Activated CD8-positive, alpha-beta T cell treated with anti-CD3 and anti-CD28 coated beads, Interleukin-2, amount 10 ng/mL, durations not matched to agents 7 days and 5 days (primary cell): ENCODE measurements at regions of chr1 and their contacts with region 1.

Region 1: DNA sequence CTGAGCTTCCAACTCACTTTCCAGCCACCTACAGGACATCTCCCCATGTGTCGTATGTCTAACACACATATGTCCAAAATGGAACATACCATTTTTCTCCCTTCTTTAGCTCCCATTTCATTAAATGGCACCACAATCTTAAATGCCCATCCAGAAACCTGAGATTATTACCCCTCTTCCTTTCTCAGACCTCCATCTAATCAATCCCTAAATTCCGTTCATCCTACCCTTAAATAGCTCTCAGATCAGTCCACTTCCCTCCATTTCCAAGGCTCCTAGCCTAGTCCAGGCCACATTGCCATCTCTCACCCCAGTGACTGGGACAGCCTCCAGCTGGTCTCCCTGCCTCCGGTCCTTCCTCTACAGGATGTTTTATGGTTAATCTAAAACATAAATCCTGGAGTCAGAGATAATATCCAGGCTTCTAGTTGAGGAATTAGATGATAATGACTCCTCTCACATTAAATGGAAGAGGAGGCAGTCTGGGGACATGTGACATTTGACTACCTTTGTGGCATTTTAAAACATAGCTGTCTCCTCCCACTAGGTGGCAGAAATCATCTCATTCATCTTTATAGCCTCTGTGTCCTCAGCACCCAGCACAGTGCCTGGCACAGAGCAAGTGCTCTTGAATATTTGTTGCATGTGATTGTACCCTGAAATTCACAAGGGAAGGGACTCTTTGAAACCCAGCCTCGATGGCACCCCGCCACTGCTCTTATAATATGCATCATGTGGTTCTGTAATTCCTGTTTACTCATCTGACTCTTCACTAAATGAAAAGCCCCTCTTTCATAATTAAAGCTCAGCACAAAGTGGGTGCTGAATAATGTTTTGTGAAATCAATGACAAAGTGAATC is 102.3 kb downstream of the TMEM53 start:
- DNase-seq: peak; percentile 42
- ATAC-seq: peak; percentile 75
- H3K4me3 Mint-ChIP-seq: no peak overlapping the region
- H3K27ac Mint-ChIP-seq: no peak overlapping the region
- H3K4me1 Mint-ChIP-seq: no peaks in the 10 kb centered on the region
- H3K27me3 Mint-ChIP-seq: peaks cover 24% of the 10 kb centered on the region

Region 2: GRCh38 chr1:44557778-44558177 is 14.2 kb before region 1 on chr1:
- CTCF ChIA-PET with region 1: interaction called, 30 read pairs
- POLR2A ChIA-PET with region 1: no interaction called
- DNase-seq: no peak
- ATAC-seq: no peak
- H3K4me3 Mint-ChIP-seq: no peak overlapping the region
- H3K27ac Mint-ChIP-seq: no peak overlapping the region
- H3K4me1 Mint-ChIP-seq: peaks cover 18% of the 10 kb centered on the region
- H3K27me3 Mint-ChIP-seq: peaks cover 6% of the 10 kb centered on the region

Region 3: DNA sequence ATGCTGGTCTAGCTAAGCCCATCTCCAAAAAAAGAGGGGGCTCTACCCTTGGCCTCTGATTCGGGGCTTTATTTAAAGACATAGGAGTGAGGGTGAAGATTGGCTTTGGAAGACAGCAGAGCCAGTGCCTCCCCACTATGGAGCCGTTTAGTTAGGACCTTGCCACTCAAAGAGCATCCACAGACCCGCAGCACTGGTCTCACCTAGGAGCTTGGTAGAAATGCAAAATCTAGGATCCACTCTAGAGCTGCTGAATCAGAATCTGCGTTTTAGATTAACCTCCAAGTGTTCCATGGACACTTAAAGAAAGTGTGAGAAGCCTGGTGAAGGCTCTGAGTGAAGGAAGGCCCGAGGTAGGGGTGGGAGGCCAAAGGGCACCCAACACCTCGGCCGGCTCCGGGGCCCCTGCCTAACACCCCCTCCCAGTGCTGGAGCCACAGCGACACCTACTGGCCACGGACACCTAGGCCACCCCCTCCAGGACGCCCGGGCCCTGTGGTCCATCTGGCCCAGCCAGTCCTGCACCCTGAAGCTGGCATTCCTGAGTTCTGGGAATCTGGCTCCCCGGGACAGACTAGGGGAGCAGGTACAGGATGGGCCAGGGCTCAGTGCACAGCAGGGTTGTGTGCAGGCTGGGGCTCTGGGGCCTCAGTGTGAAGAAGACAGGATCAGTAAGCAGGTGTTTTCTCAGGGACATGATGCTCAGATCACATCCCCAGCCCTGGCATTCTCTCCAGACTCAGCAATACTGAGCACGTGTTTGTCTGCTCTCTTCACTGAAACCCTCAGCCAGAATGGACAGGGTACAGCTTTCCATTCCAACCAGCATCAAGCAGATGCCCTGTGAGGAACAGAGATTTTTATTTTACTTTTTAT is 23.2 kb after region 1 on chr1:
- CTCF ChIA-PET with region 1: interaction called, 27 read pairs
- POLR2A ChIA-PET with region 1: no interaction called
- DNase-seq: peak; percentile 82
- ATAC-seq: peak; percentile 96
- H3K4me3 Mint-ChIP-seq: no peak overlapping the region
- H3K27ac Mint-ChIP-seq: no peak overlapping the region
- H3K4me1 Mint-ChIP-seq: no peaks in the 10 kb centered on the region
- H3K27me3 Mint-ChIP-seq: no peaks in the 10 kb centered on the region